ENCODE measurements at regions of chr5 and their contacts with region 1.

Region 1: GRCh38 chr5:133347039-133347438 is 265.3 kb downstream of the FSTL4 start:
- DNase-seq: no peak
- H3K4me3 ChIP-seq: no peak overlapping the region
- H3K27ac ChIP-seq: no peak overlapping the region
- H3K4me1 ChIP-seq: peaks cover 0 to 10% (median 3%) of the 10 kb centered on the region in 4 experiments; a peak in 4 of 7 replicates
- H3K27me3 ChIP-seq: no peaks in the 10 kb centered on the region
- CTCF ChIP-seq: peak; percentile 30 to 38 (median 34)
- EP300 ChIP-seq: no peak
- POLR2A ChIP-seq: no peak
- RAD21 ChIP-seq: peak; percentile 27 to 43

Region 2: DNA sequence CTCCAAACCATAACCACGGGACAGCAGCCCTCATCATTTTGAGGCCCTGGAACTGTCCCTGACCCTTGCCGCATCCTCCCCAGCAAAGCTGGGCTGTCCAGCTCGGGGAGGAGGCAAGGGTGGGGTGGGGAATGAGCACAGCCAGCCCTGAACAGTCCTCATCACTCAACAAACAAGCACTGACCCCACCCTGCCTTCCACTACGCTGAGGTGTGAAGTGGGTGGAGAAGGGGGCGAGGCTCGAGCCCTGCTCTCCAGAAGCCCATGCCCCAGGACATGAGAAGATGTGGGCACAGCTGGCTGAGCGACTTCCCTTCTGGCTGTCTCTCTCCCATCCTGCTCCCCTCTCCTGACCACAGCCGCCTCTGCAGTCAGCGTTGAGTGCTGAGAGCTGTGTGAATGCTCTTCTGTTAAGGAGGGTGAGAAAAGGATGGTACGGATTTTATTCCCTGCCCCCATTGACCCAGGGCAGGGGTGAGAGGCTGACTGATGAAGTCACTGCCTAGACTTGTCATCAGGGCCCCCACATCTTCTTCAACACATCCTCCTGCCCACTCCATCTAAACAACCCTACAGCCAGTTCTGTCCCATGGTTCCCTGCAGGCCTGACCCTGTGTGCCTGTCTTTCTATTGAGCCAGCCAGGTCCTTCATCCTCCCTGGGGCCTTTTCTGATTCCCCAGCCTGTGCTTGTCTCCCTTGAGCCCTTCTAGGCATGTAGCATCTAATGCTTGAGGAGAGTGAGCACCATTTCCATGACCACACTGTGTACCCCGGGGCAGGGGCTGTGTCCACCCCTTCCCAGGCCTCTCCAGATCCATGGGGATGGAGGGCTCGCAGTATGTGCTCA is 10.7 kb before region 1 on chr5:
- CTCF ChIA-PET with region 1: interaction called, 13 read pairs
- POLR2A ChIA-PET with region 1: interaction called, 6 read pairs
- DNase-seq: no peak
- H3K4me3 ChIP-seq: no peak overlapping the region
- H3K27ac ChIP-seq: no peak overlapping the region
- H3K4me1 ChIP-seq: peaks cover 0 to 23% (median 5%) of the 10 kb centered on the region in 4 experiments; a peak in 6 of 7 replicates
- H3K27me3 ChIP-seq: no peaks in the 10 kb centered on the region; a peak in 1 of 7 replicates
- CTCF ChIP-seq: no peak
- EP300 ChIP-seq: no peak
- POLR2A ChIP-seq: no peak
- RAD21 ChIP-seq: no peak

Region 3: GRCh38 chr5:133460172-133460758 is 113.2 kb after region 1 on chr5:
- CTCF ChIA-PET with region 1: interaction called, 14 read pairs
- POLR2A ChIA-PET with region 1: no interaction called
- DNase-seq: peak; percentile 31 to 90
- H3K4me3 ChIP-seq: no peak overlapping the region
- H3K27ac ChIP-seq: no peak overlapping the region
- H3K4me1 ChIP-seq: peaks cover 0 to 5% (median 2%) of the 10 kb centered on the region in 4 experiments; a peak in 2 of 7 replicates
- H3K27me3 ChIP-seq: no peaks in the 10 kb centered on the region
- CTCF ChIP-seq: peak; percentile 94 to 97 (median 96)
- EP300 ChIP-seq: no peak
- POLR2A ChIP-seq: no peak
- RAD21 ChIP-seq: peak; percentile 89 to 90